Ovary (tissue), 10 donors: ENCODE measurements at regions of chr20 and their contacts with region 1.

Region 1: GRCh38 chr20:25195014-25195961 is at the start of gene ENTPD6:
- DNase-seq: peak; percentile 92 to 98 (median 96)
- H3K4me3 ChIP-seq: peak within 1 kb of the TSS; percentile 77
- H3K27ac ChIP-seq: peak within 1 kb of the TSS; percentile 58 to 75
- H3K4me1 ChIP-seq: peaks cover 22% of the 10 kb centered on the region
- H3K27me3 ChIP-seq: no peaks in the 10 kb centered on the region
- CTCF ChIP-seq: no peak
- EP300 ChIP-seq: no peak
- POLR2A ChIP-seq: peak; percentile 82
- total RNA-seq, gene ENTPD6: 34.9 to 73.8 (median 66.5) TPM

Region 2: DNA sequence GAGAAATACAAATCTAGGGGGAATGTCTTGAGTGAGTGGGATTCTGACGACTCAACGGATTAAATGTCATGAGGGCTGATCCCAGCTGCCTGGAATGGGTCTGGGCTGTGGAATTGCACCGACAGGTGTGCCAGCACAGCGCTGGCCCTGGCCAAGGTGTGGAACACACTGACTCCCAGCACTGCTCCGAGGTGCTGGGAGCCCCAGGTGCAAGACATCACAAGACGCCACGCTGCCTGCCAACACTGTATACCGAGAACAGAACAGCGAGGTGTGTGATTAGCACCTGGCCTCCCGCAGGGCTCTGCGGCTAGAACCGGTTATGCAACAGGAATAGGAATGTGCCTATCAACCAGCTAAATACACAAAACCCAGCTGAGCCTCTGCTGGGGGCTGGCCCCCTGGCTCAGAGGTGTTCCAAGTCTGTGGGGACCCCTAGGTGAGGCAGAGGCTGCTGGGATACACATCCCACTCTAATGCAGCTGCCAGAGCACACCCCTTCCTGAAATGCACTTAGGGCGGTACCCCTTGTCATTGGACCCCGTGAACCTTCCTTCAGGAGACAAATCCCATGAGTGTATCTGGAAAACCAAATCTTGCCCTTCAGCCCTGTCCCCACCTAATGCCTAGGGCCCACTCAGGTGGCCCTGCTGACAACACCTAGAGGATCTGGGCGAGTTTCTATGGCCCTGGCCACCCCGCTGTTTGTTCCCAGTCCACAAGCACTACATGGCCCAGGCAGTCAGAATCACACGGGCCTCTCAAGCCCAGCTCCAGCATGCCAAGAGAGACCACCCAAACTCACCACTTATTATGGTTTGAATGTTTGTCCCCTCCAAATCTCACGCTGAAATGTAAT is 177.8 kb before region 1 on chr20:
- intact Hi-C with region 1: no loop called
- DNase-seq: peak in 1 of 5 donors; percentile 7
- H3K4me3 ChIP-seq: no peak overlapping the region
- H3K27ac ChIP-seq: no peak overlapping the region
- H3K4me1 ChIP-seq: no peaks in the 10 kb centered on the region
- H3K27me3 ChIP-seq: no peaks in the 10 kb centered on the region
- CTCF ChIP-seq: no peak
- EP300 ChIP-seq: no peak
- POLR2A ChIP-seq: no peak

Region 3: GRCh38 chr20:25057234-25058050 is 137.8 kb before region 1 on chr20:
- intact Hi-C with region 1: loop called in 2 of 4 experiments (anchors 5 kb)
- DNase-seq: peak; percentile 58 to 69 (median 67)
- H3K4me3 ChIP-seq: peak overlapping the region; percentile 80
- H3K27ac ChIP-seq: peak overlapping the region; percentile 74 to 86
- H3K4me1 ChIP-seq: peaks cover 37% of the 10 kb centered on the region
- H3K27me3 ChIP-seq: no peaks in the 10 kb centered on the region
- CTCF ChIP-seq: no peak
- EP300 ChIP-seq: no peak
- POLR2A ChIP-seq: peak; percentile 34

Region 4: DNA sequence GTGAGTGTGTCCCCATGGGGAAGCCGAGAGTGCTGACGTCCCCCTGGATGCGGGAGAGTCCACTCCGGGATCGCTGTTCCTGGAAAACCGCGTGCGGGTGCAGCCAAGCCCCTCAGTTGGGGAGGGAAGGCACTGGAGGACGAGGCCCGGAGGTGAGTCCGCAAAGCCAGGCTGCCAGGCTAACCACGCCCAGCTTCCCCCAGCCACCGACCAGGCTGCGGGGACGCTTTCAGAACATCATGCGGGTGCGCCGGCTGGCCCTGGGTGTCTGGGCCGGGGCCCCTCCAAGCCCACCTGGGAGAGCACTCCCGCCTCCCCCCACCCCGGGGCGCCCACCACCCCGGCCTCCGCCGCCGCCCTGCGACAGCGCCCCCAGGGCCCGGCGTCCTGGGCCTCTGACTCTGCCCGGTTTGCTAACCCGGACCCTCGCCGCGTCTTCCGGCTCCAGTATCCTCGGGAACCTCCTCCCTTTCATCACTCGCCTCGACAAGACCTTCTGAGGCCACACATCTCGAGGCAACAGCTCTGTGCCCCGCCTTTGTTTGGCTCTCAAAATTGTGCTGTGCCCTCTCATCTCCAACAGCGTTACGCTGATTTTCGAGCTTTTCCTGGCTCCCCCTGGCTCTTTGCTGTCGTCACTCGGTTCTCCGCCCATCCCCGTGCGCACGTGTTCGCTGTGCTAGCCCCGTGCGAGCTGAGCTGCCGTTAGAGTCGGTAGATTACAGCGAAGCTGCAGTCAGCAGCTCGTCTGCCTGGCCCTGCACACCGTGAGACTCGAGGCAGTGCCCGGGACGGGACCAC is 46.9 kb before region 1 on chr20:
- intact Hi-C with region 1: no loop called
- DNase-seq: peak; percentile 76 to 83 (median 81)
- H3K4me3 ChIP-seq: peak overlapping the region; percentile 12
- H3K27ac ChIP-seq: no peak overlapping the region
- H3K4me1 ChIP-seq: no peaks in the 10 kb centered on the region
- H3K27me3 ChIP-seq: no peaks in the 10 kb centered on the region
- CTCF ChIP-seq: no peak
- EP300 ChIP-seq: no peak
- POLR2A ChIP-seq: no peak

Region 5: DNA sequence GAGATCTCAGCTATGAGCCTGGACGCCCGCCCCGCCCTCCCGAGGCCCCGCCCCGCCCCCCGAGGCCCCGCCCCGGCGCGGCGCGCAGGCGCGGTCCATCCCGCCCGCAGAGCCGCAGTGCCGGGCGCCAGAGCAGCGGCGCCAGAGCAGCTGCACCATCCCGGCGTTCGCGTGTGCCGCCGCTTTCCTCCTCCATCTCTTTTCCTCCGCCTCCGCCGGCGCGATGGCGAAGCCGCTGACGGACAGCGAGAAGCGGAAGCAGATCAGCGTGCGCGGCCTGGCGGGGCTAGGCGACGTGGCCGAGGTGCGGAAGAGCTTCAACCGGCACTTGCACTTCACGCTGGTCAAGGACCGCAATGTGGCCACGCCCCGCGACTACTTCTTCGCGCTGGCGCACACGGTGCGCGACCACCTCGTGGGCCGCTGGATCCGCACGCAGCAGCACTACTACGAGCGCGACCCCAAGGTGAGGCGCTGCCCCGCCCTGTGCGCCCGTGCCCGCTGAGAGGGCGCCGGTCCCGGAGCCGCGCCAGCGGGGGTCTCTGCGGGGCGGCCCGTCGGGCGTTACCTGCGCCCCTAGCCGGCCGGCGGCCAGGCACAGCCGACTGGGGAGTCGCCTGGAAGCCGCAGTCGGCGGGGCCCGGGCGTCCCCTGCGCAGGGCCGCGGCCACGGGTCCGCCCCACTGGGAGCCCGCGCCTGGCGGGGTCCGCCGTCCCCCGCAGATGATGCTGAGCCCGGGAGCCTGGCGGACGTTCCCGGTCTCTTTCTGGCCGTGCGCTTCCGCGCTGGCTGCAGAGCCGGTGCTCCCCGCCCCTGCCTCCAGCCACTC is 52.9 kb after region 1 on chr20 and contains the start of gene PYGB:
- intact Hi-C with region 1: loop called in 2 of 4 experiments (anchors 5 to 10 kb)
- DNase-seq: peak; percentile 71 to 86 (median 78)
- H3K4me3 ChIP-seq: peak within 1 kb of the TSS; percentile 51
- H3K27ac ChIP-seq: peak within 1 kb of the TSS; percentile 65 to 78
- H3K4me1 ChIP-seq: peaks cover 5% of the 10 kb centered on the region
- H3K27me3 ChIP-seq: no peaks in the 10 kb centered on the region
- CTCF ChIP-seq: peak in 1 of 3 donors; percentile 11
- EP300 ChIP-seq: no peak
- POLR2A ChIP-seq: peak; percentile 71
- total RNA-seq, gene PYGB: 24.2 to 54.2 (median 52.2) TPM

Region 6: GRCh38 chr20:25324412-25324811 is 129.1 kb after region 1 on chr20:
- intact Hi-C with region 1: no loop called
- DNase-seq: no peak
- H3K4me3 ChIP-seq: no peak overlapping the region
- H3K27ac ChIP-seq: no peak overlapping the region
- H3K4me1 ChIP-seq: peaks cover 2% of the 10 kb centered on the region
- H3K27me3 ChIP-seq: no peaks in the 10 kb centered on the region
- CTCF ChIP-seq: no peak
- EP300 ChIP-seq: no peak
- POLR2A ChIP-seq: no peak